ENCODE measurements at regions of chr22 and their contacts with region 1.

Region 1: DNA sequence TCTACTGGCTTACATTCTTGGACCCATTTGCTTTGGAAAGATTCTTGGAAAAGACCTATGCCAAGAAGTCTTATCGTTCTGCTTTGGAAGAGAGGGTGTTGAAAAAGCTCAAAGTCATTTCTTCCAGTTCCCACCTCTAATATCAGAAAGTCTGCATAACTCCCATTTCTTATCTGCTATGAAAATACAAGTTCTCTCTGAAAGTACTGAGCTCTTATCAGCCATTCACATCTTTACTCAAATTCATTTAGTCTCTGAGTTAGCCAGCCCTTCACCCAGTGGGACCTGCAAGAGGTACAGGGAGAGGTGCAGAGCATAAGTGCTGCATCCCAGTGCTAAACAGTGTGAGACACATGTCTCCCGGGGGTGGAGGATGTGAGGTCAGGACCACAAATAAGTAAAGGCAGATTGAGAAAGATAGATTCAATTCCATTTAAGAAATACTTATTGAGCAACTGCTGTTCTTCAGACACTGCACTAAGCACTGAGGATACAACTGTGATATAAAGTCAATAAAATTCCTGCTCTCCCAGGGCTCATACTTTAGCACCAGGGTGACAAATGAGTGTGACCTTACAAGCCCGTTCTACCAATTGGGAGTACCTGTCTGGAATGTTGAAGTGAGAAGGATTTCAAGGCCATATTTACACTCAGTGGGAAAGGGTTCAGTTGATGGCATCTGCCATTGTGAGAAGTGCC is 76.7 kb downstream of the PISD start:
- DNase-seq: no peak
- H3K4me3 Mint-ChIP-seq: peak overlapping the region; percentile 31
- H3K27ac Mint-ChIP-seq: peak overlapping the region; percentile 85
- H3K4me1 Mint-ChIP-seq: peaks cover 52% of the 10 kb centered on the region
- H3K27me3 Mint-ChIP-seq: no peaks in the 10 kb centered on the region

Region 2: DNA sequence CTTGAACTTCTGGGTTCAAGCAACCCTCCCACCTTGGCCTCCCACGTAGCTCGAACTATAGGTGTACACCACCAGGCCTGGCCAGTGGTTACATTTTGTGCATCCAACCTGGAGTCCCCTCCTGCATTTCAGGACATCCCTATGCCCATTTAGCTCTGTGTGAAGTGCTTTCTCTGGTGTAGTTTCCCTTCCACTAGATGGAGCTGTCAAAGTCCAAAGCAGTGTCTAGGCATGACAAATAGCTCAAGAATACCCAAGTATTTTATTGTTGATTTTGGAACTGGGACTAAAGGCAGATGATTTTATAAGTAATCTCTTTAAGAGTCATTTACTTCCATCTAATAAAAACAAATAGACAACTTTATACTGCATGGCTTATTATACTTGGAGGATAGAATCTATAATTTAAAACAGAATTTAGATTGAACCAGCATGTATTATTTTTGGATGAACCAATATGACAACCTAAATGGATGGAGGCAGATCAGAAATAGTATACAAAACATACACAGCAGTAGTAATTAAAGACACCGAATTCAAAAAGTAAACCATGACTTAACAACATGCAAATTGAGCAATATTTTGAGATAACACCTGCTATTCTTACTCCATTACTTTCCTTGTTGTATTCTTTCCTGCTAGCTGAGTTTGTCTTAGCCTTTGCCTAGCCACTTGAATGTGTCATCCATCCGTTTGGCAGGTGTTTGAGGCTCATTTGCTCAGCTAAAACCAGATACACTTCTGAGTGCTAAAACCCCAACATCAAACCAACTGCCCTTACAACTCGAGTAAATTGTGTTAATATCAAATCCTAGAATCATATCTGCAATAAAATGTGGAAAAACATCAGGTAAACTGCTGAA is 133.4 kb before region 1 on chr22:
- intact Hi-C with region 1: loop called (anchors 5 kb)
- DNase-seq: peak; percentile 6
- H3K4me3 Mint-ChIP-seq: no peak overlapping the region
- H3K27ac Mint-ChIP-seq: peak overlapping the region; percentile 27
- H3K4me1 Mint-ChIP-seq: no peaks in the 10 kb centered on the region
- H3K27me3 Mint-ChIP-seq: no peaks in the 10 kb centered on the region

Region 3: DNA sequence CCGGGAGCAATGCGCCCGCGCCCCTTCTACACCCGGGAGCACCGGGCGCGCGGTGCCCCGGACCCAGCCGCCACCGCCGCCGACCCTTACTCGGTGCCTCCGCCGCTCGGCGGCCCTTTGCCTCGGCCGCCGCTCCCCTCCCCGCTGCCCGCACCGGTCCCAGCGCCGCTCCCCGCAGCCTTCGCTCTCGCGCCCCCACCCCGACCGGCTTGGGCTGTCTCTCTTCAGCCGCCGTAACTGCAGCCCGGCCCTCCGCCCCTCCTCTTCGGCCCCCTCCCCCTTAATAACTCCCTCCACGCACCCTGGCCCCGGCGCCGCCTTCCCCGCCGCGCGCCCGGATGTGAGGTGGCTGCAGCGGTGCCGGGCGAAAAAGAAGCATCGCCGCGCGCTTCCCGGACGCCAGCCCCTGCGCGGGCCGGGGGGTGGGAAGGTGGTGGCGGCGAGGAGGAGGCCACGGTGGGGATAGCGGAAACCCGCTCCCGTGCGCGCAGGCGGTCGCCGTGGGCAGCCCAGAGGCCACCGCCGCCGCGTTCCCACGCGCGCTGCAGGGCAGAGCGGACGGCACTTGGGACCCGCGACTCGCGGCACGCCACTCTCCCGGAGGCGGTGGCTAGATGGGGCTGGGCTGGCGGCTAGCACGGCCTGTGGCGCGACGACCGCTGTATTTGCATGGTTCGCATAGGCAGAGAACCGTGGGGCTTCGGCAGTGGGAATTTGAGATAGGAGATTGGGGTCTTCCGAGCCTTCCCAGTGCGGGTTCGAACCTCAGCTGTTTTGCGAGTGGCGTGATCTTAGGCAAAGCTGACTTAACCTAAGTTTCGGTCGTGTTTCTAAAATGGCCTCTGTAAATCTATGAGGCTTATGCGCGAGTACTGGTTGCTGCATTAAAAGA is 95.5 kb before region 1 on chr22 and contains the start of gene EIF4ENIF1:
- intact Hi-C with region 1: loop called (anchors 2 kb)
- DNase-seq: peak; percentile 81
- H3K4me3 Mint-ChIP-seq: peak within 1 kb of the TSS; percentile 91
- H3K27ac Mint-ChIP-seq: peak within 1 kb of the TSS; percentile 99
- H3K4me1 Mint-ChIP-seq: peaks cover 56% of the 10 kb centered on the region
- H3K27me3 Mint-ChIP-seq: no peaks in the 10 kb centered on the region
- total RNA-seq, gene EIF4ENIF1: 101 and 105 TPM in 2 replicates

Region 4: DNA sequence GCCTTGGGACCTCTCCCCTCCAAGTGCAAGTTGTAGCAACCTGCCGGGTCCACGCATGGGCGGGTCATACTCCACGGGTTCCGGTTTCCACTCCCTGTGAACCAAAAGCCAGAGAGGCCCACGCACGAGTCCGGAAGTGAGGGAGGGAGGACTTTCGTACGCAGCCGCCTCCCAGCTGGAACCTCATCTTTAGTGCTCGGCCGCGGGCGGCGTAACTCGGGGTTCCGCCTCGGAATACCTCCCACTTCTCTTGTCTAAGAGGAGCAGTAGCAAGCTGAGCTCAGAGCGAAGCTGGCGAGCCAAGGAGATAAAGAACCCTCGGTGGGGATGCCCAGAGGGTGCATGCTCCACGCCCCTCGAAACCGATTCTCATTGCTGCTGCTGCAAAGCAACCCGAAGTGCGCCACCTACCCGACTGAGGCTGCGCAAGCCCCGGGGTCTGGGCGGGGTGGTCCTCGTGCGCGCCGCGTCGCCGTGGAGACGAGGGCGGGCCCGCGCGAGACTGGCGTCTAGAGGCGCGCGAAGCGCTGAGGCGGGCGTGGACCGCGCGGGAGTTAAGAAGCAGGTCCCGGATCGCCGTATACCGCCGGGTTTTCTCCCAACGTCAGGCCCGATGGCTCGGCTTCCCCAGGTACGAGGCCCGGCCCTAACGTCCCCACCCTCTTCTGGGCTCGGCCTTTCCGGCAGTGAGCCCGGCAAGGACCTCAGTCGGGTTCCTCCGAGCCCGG is 89.1 kb before region 1 on chr22 and contains the start of gene SFI1:
- intact Hi-C with region 1: loop called (anchors 1 kb)
- DNase-seq: peak; percentile 94
- H3K4me3 Mint-ChIP-seq: peak within 1 kb of the TSS; percentile 99
- H3K27ac Mint-ChIP-seq: peak within 1 kb of the TSS; percentile 99
- H3K4me1 Mint-ChIP-seq: peaks cover 40% of the 10 kb centered on the region
- H3K27me3 Mint-ChIP-seq: no peaks in the 10 kb centered on the region
- total RNA-seq, gene SFI1: 406 and 416 TPM in 2 replicates

Region 5: DNA sequence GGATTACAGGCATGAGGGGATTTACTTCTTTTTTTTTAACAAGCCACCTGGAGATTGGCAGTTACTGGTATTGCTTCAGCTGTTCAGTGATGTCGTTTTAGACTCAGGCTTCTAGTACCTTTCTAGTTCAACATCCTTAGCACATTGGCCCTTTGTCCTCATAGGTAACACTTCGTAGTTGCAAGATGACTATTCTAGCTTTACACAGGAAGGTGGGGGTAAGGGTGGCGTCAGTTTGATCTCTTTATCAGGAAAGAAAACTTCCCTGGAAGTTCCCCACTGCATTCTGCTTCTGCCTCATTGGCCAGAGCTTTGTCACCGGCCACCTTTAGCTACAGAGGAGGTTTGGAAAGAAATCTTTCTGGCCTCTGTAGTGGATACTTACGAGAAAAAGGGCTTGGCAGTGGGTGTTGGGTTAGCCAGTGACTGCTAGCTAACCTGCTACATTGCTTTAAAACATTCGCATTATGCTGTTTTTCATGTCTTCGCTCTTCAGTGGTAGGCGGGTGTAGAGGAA is 48.2 kb before region 1 on chr22:
- intact Hi-C with region 1: loop called (anchors 2 kb)
- DNase-seq: peak; percentile 64
- H3K4me3 Mint-ChIP-seq: peak overlapping the region; percentile 80
- H3K27ac Mint-ChIP-seq: peak overlapping the region; percentile 97
- H3K4me1 Mint-ChIP-seq: peaks cover 69% of the 10 kb centered on the region
- H3K27me3 Mint-ChIP-seq: no peaks in the 10 kb centered on the region

Region 6: GRCh38 chr22:31561238-31561887 is 23.9 kb before region 1 on chr22:
- intact Hi-C with region 1: loop called (anchors 2 kb)
- DNase-seq: peak; percentile 39
- H3K4me3 Mint-ChIP-seq: no peak overlapping the region
- H3K27ac Mint-ChIP-seq: peak overlapping the region; percentile 77
- H3K4me1 Mint-ChIP-seq: peaks cover 16% of the 10 kb centered on the region
- H3K27me3 Mint-ChIP-seq: no peaks in the 10 kb centered on the region

Region 7: GRCh38 chr22:31630331-31631329 is 45.3 kb after region 1 on chr22:
- intact Hi-C with region 1: loop called (anchors 2 kb)
- DNase-seq: peak; percentile 82
- H3K4me3 Mint-ChIP-seq: peak overlapping the region; percentile 87
- H3K27ac Mint-ChIP-seq: peak overlapping the region; percentile 88
- H3K4me1 Mint-ChIP-seq: peaks cover 54% of the 10 kb centered on the region
- H3K27me3 Mint-ChIP-seq: no peaks in the 10 kb centered on the region